A673 (cell line): ENCODE measurements at regions of chr1 and their contacts with region 1.

Region 1: GRCh38 chr1:59296358-59297256 is at the start of gene FGGY:
- DNase-seq: peak; percentile 97
- H3K4me3 ChIP-seq: peak within 1 kb of the TSS; percentile 46
- H3K27ac ChIP-seq: peak within 1 kb of the TSS; percentile 69
- H3K4me1 ChIP-seq: no peaks in the 10 kb centered on the region
- H3K27me3 ChIP-seq: no peaks in the 10 kb centered on the region
- CTCF ChIP-seq: no peak
- total RNA-seq, gene FGGY: 2.6 and 3.6 TPM in 2 replicates

Region 2: GRCh38 chr1:58783993-58784757 is 512.4 kb before region 1 on chr1 and contains the start of gene JUN:
- CTCF ChIA-PET with region 1: no interaction called
- POLR2A ChIA-PET with region 1: no interaction called
- intact Hi-C with region 1: loop called (anchors 2 kb)
- DNase-seq: peak; percentile 99
- H3K4me3 ChIP-seq: peak within 1 kb of the TSS; percentile 63
- H3K27ac ChIP-seq: peak within 1 kb of the TSS; percentile 87
- H3K4me1 ChIP-seq: peaks cover 32% of the 10 kb centered on the region
- H3K27me3 ChIP-seq: peaks cover 3% of the 10 kb centered on the region
- CTCF ChIP-seq: no peak
- total RNA-seq, gene JUN: 16.9 and 24.9 TPM in 2 replicates

Region 3: GRCh38 chr1:59750328-59751003 is 453.9 kb after region 1 on chr1:
- CTCF ChIA-PET with region 1: no interaction called
- POLR2A ChIA-PET with region 1: no interaction called
- intact Hi-C with region 1: no loop called
- DNase-seq: no peak
- H3K4me3 ChIP-seq: no peak overlapping the region
- H3K27ac ChIP-seq: no peak overlapping the region
- H3K4me1 ChIP-seq: peaks cover 4% of the 10 kb centered on the region
- H3K27me3 ChIP-seq: no peaks in the 10 kb centered on the region
- CTCF ChIP-seq: no peak